ENCODE measurements at regions of chr15 and their contacts with region 1.

Region 1: DNA sequence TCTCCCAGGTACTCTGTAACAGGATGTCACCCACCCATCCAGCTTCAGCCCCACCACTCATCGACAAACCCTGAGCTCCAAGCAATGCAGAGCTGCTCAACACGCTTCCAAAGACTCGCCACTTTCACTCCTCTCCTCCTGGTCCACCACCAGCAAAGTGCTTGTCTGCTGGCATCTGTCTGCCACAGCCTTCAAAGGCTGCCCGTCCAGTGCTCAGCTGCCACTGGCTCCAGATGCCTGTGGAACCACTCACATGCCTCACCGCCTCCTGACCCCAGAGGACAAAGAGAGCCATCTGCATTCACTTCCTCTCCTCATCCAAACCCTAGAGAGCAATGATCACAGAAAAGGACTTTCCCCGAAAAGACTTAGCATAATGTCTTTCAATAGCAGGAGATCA is 109.5 kb upstream of the OCA2 start:
- DNase-seq: no peak
- ATAC-seq: no peak
- H3K4me3 Mint-ChIP-seq: no peak overlapping the region
- H3K27ac Mint-ChIP-seq: no peak overlapping the region
- H3K4me1 Mint-ChIP-seq: no peaks in the 10 kb centered on the region
- H3K27me3 Mint-ChIP-seq: no peaks in the 10 kb centered on the region

Region 2: GRCh38 chr15:28178290-28178689 is 30.3 kb before region 1 on chr15:
- CTCF ChIA-PET with region 1: no interaction called
- POLR2A ChIA-PET with region 1: no interaction called
- intact Hi-C with region 1: loop called in 1 of 2 experiments (anchors 5 kb)
- DNase-seq: no peak
- ATAC-seq: no peak
- H3K4me3 Mint-ChIP-seq: no peak overlapping the region
- H3K27ac Mint-ChIP-seq: no peak overlapping the region
- H3K4me1 Mint-ChIP-seq: no peaks in the 10 kb centered on the region
- H3K27me3 Mint-ChIP-seq: no peaks in the 10 kb centered on the region